ENCODE measurements at regions of chr10 and their contacts with region 1.

Region 1: DNA sequence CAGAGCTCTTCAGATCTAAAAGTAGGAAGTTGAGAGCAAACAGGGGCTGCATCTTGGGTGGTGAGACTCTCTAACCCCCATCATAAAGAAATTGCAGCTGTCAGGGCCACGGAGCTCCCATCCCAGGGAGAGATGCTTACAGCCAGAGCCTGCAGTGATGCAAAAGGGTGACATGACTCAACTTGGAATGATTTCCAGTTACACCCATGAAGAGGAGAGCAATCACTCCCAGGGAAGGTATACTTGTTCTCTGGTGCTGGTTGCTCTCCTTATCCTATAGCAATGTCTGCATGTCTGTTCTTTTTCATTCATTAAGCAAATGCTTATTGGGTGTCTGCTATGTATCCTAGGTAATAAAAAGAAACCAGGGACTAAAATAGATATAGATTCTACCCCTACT is 228.0 kb downstream of the RAB11FIP2 start:
- DNase-seq: no peak
- ATAC-seq: no peak
- H3K4me3 ChIP-seq: no peak overlapping the region
- H3K27ac ChIP-seq: no peak overlapping the region
- H3K4me1 ChIP-seq: no peaks in the 10 kb centered on the region
- H3K27me3 ChIP-seq: peaks cover 3% of the 10 kb centered on the region; the same call in 1 of the 2 replicates
- CTCF ChIP-seq: no peak

Region 2: GRCh38 chr10:118264838-118265510 is 446.3 kb after region 1 on chr10:
- CTCF ChIA-PET with region 1: no interaction called
- POLR2A ChIA-PET with region 1: interaction called, 10 read pairs
- in situ Hi-C with region 1: no loop called
- intact Hi-C with region 1: no loop called
- DNase-seq: no peak
- ATAC-seq: no peak
- H3K4me3 ChIP-seq: no peak overlapping the region
- H3K27ac ChIP-seq: no peak overlapping the region
- H3K4me1 ChIP-seq: no peaks in the 10 kb centered on the region
- H3K27me3 ChIP-seq: peaks cover 35% of the 10 kb centered on the region
- CTCF ChIP-seq: 0 out of 2 replicates have a peak, but pooled peaks have one; percentile 1